Activated naive CD4-positive, alpha-beta T cell treated with anti-CD3 and anti-CD28 coated beads for 36 hours (primary cell): ENCODE measurements at regions of chr21 and their contacts with region 1.

Region 1: DNA sequence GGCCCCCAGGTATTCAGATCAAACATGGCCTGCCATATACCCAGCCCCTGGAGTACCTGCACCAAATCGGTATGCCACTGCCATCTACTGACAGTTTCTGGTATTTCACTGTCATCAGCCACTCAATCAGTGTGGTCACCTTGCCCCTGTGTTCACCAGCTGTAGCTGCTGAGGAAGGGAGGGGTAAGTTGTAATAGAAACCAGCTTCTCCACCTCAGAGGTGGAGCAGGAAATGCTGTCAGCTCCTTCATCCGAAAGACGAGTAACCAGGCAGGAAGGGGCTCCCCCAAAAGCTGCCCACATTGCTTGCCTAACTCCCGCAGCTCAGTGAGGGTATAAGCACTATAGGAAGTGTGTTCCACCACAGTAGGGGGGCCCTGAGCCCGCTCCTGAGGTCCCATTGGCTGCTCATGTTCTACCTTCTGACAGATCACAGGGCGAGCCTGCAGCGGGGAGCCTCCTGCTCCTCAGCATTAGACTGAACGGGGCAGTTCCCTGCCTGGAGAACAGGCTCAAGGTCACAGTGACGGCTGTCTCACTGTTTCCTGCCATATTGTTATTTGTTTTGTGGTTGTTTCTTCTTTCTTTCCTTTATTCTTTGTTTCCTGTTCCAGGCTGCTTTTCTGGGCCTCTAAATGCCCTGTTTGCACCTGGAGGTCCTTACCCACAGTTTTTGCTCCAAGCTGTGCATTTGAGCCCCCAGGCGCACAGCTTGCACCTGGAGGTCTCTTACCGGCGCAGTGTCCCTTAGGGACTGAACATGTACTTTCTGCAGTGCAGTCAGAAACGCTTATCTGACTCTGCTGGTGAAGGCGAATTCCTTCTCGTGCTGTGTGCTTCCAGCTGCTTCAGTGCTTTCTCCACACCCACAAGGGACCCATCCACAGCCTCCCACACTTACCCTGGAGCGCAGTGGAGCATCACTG is 1638.3 kb downstream of the MRPL39 start:
- DNase-seq: peak; percentile 88
- H3K4me3 Mint-ChIP-seq: no peak overlapping the region
- H3K27ac Mint-ChIP-seq: peak overlapping the region; percentile 71
- H3K4me1 Mint-ChIP-seq: peaks cover 12% of the 10 kb centered on the region
- H3K27me3 Mint-ChIP-seq: no peaks in the 10 kb centered on the region

Region 2: GRCh38 chr21:23522751-23523150 is 446.2 kb before region 1 on chr21:
- CTCF ChIA-PET with region 1: no interaction called
- intact Hi-C with region 1: no loop called
- DNase-seq: no peak
- H3K4me3 Mint-ChIP-seq: no peak overlapping the region
- H3K27ac Mint-ChIP-seq: no peak overlapping the region
- H3K4me1 Mint-ChIP-seq: no peaks in the 10 kb centered on the region
- H3K27me3 Mint-ChIP-seq: no peaks in the 10 kb centered on the region

Region 3: DNA sequence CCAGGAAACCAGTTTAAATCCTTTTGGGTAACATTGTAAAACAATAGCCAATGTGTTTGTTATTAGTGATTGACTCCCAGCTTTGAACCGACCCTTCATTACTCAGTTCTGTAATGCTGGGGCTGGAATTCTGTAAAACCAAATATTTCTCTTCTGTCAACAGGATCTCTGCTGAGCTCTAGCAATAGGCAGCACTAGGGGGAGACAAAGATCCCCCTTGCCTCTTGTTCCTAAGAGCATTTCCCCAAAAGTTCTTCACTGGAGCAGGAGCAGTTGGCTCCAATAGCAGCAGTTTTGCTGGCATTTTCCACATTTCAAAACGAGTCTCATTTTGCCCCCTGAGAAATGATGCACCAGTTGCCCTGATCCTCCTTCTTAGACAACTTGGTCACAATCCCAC is 32.8 kb before region 1 on chr21:
- CTCF ChIA-PET with region 1: interaction called, 4 read pairs
- intact Hi-C with region 1: loop called (anchors 2 kb)
- DNase-seq: peak; percentile 10
- H3K4me3 Mint-ChIP-seq: no peak overlapping the region
- H3K27ac Mint-ChIP-seq: no peak overlapping the region
- H3K4me1 Mint-ChIP-seq: no peaks in the 10 kb centered on the region
- H3K27me3 Mint-ChIP-seq: no peaks in the 10 kb centered on the region

Region 4: DNA sequence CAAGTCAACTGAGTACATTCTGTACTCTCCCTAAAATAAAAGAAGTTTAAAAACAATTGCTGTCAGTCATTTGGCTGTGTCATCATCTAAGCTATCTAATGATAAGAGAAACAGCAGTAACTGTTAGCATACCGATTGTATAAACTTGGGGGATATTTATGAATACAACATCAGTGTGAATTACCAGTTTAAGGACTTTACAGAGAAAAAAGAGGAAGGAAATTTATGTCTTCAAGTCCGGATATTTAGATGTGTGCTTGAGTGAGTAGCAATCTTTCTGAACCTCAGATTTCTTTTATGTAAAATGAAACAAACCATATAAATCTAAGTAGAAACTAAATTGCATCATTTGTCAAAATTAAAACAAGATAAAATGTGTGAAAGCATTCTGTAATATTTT is 81.2 kb after region 1 on chr21:
- CTCF ChIA-PET with region 1: no interaction called
- intact Hi-C with region 1: no loop called
- DNase-seq: no peak
- H3K4me3 Mint-ChIP-seq: no peak overlapping the region
- H3K27ac Mint-ChIP-seq: no peak overlapping the region
- H3K4me1 Mint-ChIP-seq: peaks cover 20% of the 10 kb centered on the region
- H3K27me3 Mint-ChIP-seq: no peaks in the 10 kb centered on the region